MCF 10A (cell line): ENCODE measurements at regions of chr1 and their contacts with region 1.

Region 1: DNA sequence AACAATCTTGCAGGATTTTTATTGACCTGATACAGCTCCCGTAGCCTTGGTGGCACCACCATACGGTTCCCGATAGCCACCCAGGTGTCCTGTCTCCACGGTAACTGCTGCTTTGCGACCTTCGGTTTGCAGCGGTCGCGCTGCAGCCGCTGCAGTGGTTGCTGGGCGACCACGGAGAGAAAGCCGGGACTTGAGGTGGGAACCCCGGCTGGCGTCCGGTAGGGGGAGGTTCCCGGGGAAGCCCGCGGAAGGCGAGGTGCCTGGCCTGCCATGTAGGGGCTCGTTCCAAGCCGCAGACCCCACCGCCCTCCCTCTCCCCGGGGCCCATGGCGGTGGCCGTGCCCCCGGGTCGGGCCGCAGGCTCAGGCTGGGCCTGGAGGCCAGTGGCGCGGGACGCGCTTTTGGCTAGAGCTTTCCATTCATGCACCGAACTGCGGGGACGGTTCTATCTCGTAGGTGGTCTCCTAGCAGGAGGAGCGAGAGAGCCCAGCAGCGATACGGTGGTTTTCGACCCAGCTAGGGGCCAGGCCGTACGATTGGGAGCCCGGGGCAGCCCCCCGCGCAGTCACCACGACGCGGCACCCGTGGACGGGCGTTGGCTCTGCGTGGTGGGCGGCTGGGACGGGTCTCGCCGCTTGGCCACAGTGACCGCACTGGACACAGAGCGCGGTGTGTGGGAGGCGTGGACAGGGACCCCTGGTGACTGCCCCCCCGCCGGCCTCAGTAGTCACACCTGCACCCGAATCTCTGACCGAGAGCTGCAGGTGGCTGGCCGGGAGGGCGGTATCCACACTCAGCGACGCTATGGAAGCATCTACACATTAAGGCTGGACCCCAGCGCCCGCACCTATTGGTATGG is at the start of gene KLHDC9:
- DNase-seq: no peak
- H3K4me3 Mint-ChIP-seq: no peak within 1 kb of the TSS
- H3K27ac Mint-ChIP-seq: peak within 1 kb of the TSS; percentile 61
- H3K4me1 Mint-ChIP-seq: peaks cover 37% of the 10 kb centered on the region
- H3K27me3 Mint-ChIP-seq: no peaks in the 10 kb centered on the region
- CTCF ChIP-seq: no peak
- total RNA-seq, gene KLHDC9: not detected in 2 replicates

Region 2: GRCh38 chr1:160726498-160727315 is 371.7 kb before region 1 on chr1:
- CTCF ChIA-PET with region 1: interaction called, 10 read pairs
- POLR2A ChIA-PET with region 1: interaction called, 5 read pairs
- intact Hi-C with region 1: loop called (anchors 2 kb)
- DNase-seq: peak; percentile 90
- H3K4me3 Mint-ChIP-seq: no peak overlapping the region
- H3K27ac Mint-ChIP-seq: no peak overlapping the region
- H3K4me1 Mint-ChIP-seq: no peaks in the 10 kb centered on the region
- H3K27me3 Mint-ChIP-seq: no peaks in the 10 kb centered on the region
- CTCF ChIP-seq: peak; percentile 91

Region 3: DNA sequence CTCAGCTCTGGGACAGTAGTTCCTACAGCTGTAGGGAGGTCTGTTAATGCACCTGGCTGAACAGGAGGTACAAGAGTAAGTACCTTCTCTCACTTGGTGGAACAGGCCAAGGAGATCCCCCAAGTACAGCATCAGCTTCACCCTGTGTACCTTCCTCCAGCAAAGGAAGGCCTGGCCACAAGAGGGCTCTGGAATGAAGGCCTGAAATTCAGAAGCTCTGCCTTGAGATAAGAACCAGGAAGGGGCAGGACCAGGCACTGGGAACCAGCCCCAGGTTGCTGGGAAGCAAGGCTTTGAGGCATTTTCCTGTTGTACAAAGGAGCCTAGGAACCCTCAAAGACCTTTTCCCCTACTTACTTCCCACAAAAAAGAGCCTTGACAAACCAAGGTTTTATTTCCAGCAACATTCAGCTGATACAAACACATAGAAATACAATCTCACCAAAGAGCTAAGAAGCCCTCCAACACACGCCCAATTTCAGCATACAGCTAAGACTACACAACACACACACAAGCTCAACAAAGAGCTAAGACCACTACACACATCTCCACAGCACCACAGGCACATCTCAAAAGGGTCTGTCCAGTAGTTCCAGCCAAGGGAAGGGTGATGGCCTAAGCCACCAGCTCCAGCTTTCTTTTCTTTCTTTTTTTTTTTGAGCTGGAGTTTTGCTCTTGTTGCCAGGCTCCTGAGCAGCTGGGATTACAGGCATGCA is 101.0 kb before region 1 on chr1:
- CTCF ChIA-PET with region 1: interaction called, 115 read pairs
- POLR2A ChIA-PET with region 1: interaction called, 11 read pairs
- intact Hi-C with region 1: loop called (anchors 1 kb)
- DNase-seq: peak; percentile 74
- H3K4me3 Mint-ChIP-seq: no peak overlapping the region
- H3K27ac Mint-ChIP-seq: no peak overlapping the region
- H3K4me1 Mint-ChIP-seq: peaks cover 35% of the 10 kb centered on the region
- H3K27me3 Mint-ChIP-seq: no peaks in the 10 kb centered on the region
- CTCF ChIP-seq: peak; percentile 44

Region 4: DNA sequence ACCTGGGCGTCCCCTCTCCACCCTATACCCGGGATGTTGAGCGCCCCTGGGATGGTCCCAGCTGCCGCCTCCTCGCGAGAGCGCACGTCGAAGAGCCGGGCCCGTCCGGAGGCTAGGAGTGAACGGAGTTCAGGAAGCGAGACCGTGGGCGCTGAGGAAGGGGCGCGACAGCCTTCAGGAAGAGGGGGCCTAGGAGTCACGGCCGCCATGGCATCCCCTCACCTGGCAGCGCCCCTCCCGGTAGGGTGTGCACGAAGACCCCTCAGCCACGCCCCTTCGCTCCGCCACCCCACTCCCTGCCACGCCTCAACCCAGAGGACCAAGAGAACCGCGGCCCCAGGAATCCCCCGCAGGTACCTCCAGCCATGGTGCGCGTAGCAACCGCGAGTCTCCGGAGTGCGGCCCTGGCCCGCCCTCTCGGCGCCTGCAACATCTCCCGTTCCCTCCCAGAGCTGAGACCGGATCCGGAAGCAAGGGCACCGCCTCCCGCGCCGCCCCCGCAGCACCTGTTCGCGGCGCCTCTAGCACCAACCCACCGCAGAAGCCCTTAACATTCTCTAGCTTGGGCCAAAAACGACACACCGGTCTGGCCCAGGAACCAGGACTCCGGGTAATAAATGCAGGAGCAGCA is 59.8 kb before region 1 on chr1 and contains the start of gene TSTD1:
- CTCF ChIA-PET with region 1: interaction called, 89 read pairs
- POLR2A ChIA-PET with region 1: interaction called, 91 read pairs
- intact Hi-C with region 1: loop called (anchors 1 kb)
- DNase-seq: peak; percentile 76
- H3K4me3 Mint-ChIP-seq: peak within 1 kb of the TSS; percentile 81
- H3K27ac Mint-ChIP-seq: peak within 1 kb of the TSS; percentile 76
- H3K4me1 Mint-ChIP-seq: peaks cover 17% of the 10 kb centered on the region
- H3K27me3 Mint-ChIP-seq: no peaks in the 10 kb centered on the region
- CTCF ChIP-seq: no peak
- total RNA-seq, gene TSTD1: 35.2 and 48.0 TPM in 2 replicates

Region 5: GRCh38 chr1:161082991-161083742 is 15.3 kb before region 1 on chr1:
- CTCF ChIA-PET with region 1: interaction called, 80 read pairs
- POLR2A ChIA-PET with region 1: interaction called, 15 read pairs
- intact Hi-C with region 1: no loop called
- DNase-seq: peak; percentile 98
- H3K4me3 Mint-ChIP-seq: peak overlapping the region; percentile 4
- H3K27ac Mint-ChIP-seq: peak overlapping the region; percentile 90
- H3K4me1 Mint-ChIP-seq: peaks cover 73% of the 10 kb centered on the region
- H3K27me3 Mint-ChIP-seq: no peaks in the 10 kb centered on the region
- CTCF ChIP-seq: no peak

Region 6: GRCh38 chr1:161139765-161140164 is 41.3 kb after region 1 on chr1:
- CTCF ChIA-PET with region 1: interaction called, 20 read pairs
- POLR2A ChIA-PET with region 1: interaction called, 3 read pairs
- intact Hi-C with region 1: loop called (anchors 1 kb)
- DNase-seq: peak; percentile 77
- H3K4me3 Mint-ChIP-seq: no peak overlapping the region
- H3K27ac Mint-ChIP-seq: no peak overlapping the region
- H3K4me1 Mint-ChIP-seq: peaks cover 4% of the 10 kb centered on the region
- H3K27me3 Mint-ChIP-seq: no peaks in the 10 kb centered on the region
- CTCF ChIP-seq: peak; percentile 64